GM10248 (cell line): ENCODE measurements at regions of chr12 and their contacts with region 1.

Region 1: DNA sequence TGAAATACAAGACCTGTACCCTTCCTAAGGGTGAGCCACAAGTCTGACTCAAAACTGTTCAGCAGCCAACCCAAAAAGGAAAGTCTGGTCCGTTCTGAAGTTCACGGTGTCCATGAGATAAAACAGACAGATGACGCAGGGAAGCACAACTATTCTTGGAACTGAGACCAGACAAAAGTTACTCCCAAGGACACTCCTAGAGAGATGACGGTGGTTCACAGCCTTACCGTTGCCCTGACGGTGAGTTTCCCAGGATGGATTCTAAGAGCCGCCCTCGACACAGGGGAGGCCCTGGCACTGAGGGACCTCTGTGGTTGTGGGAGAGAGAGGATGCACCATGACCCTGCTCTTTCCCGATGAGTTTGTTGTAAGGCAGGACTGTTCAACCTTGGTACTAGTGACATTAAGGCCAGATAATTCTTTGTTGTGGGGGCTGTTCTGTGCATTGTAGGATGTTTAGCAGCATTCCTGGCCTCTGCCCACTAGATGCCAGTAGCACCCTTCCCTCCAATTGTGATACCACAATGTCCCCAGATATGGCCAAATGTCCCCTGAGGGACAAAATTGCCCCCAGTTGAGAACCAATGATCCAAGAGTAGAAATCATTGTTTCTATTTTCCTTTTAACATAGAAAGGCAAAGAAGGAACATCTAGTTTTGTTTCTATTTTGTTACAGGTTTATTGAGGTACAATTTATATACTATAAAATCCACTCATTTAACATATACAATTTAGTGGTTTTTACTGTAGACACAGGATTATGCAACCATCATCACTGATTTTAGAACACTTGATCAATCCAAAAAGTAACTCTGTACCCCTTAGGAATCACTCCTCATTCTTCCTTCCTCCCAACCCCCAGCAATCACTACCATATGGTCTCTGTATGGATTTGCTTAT is 23.0 kb downstream of the OR10P1 start:
- DNase-seq: no peak
- CTCF ChIP-seq: peak; percentile 54

Region 2: GRCh38 chr12:55188974-55189556 is 470.7 kb before region 1 on chr12:
- CTCF ChIA-PET with region 1: interaction called, 14 read pairs
- POLR2A ChIA-PET with region 1: no interaction called
- DNase-seq: peak; percentile 38
- CTCF ChIP-seq: peak; percentile 59

Region 3: GRCh38 chr12:55629058-55629841 is 30.5 kb before region 1 on chr12:
- CTCF ChIA-PET with region 1: interaction called, 12 read pairs
- POLR2A ChIA-PET with region 1: no interaction called
- DNase-seq: no peak
- CTCF ChIP-seq: no peak

Region 4: GRCh38 chr12:55673638-55674037 is 13.9 kb after region 1 on chr12:
- CTCF ChIA-PET with region 1: interaction called, 18 read pairs
- POLR2A ChIA-PET with region 1: no interaction called
- DNase-seq: peak; percentile 73
- CTCF ChIP-seq: no peak

Region 5: DNA sequence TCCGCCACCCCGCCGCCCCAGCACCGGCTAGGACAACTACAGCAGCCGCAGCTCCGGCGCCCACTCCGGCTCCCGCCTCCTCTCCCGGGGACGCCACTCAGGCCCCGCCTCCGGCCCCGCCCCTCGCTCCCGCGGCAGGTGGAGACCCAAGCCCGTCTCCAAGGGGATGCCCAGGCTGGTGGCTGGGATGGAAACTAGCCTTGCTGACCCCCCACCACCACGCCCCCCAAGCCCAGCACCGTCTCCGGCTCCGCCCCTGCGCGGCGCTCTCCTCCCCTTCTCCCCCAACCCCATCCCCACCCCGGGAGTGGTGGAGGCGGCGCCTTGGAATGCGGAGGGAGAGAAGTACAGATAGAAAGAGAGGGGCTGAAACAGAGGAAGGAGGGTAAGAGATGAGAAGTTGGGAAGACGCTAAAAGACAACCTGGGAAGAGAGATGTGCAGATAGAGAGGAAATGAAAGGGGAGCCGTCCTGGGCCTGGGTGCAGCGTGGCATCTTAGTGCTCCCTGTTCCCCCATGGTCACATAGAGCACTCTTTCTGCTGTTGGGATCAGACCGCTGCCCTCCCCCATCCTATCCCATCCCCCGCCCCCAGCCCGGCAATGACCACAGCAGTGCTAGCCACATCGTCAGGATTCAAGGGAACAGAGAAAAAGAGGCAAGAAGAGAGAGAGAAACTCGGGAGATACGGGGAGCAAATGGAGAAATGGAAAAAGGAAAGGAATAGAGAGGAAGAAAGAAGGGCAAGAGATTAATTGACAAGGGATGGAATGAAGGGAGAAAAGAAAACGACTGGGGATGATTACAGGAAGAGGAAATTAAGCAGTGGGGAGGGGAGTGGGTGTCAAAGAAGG is 48.3 kb after region 1 on chr12 and contains the start of gene ITGA7:
- CTCF ChIA-PET with region 1: interaction called, 16 read pairs
- POLR2A ChIA-PET with region 1: no interaction called
- DNase-seq: peak; percentile 81
- CTCF ChIP-seq: no peak

Region 6: DNA sequence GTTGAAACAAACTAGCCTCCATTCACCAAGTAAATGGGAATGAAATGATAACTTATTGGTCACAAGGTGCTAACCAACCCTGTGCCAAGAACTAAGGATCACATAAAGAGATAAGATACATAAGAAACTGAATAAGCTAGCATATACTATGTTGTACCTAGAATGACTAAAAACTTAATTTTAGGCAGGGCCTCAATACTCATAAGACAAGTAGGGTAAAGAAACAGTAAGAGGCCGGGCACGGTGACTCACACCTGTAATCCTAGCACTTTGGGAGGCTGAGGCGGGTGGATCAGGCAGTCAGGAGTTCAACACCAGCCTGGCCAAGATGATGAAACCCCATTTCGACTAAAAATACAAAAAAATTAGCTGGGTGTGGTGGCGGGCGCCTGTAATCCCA is 100.9 kb after region 1 on chr12:
- CTCF ChIA-PET with region 1: no interaction called
- POLR2A ChIA-PET with region 1: no interaction called
- DNase-seq: no peak
- CTCF ChIP-seq: no peak